ENCODE measurements at regions of chr20 and their contacts with region 1.

Region 1: GRCh38 chr20:3115190-3116107 is 30.9 kb upstream of the AVP start:
- DNase-seq: peak in 6 of 9 donors; percentile 32 to 55 (median 44)
- ATAC-seq: peak; percentile 68
- H3K4me3 ChIP-seq: no peak overlapping the region
- H3K4me3 Mint-ChIP-seq: peak overlapping the region in 2 of 10 donors; percentile 8 to 16
- H3K27ac ChIP-seq: no peak overlapping the region
- H3K27ac Mint-ChIP-seq: peak overlapping the region in 7 of 9 donors; percentile 31 to 97 (median 77)
- H3K4me1 ChIP-seq: peaks cover 0 to 6% of the 10 kb centered on the region in 2 donors
- H3K4me1 Mint-ChIP-seq: peaks cover 11 to 47% (median 28%) of the 10 kb centered on the region in 7 donors
- H3K27me3 ChIP-seq: no peaks in the 10 kb centered on the region
- H3K27me3 Mint-ChIP-seq: no peaks in the 10 kb centered on the region

Region 2: DNA sequence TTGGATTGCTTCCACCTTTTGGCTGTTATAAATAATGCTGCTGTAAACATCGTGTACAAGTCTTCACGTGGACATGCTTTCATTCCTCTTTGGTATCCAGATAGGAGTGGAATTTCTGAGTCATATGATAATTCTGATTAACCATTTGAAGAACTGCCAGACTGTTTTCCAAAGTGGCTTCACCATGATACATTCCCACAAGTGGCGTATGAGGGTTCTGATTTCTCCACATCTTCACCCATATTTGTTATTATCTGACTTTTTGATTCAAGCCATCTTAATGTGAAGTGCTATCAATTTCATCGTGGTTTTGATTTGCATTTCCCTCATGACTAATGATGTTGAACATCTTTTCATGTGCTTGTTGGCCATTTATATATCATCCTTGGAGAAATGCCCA is 641.9 kb before region 1 on chr20:
- CTCF ChIA-PET with region 1: no interaction called
- POLR2A ChIA-PET with region 1: no interaction called
- intact Hi-C with region 1: no loop called
- DNase-seq: no peak
- ATAC-seq: no peak
- H3K4me3 ChIP-seq: no peak overlapping the region
- H3K4me3 Mint-ChIP-seq: no peak overlapping the region
- H3K27ac ChIP-seq: no peak overlapping the region
- H3K27ac Mint-ChIP-seq: peak overlapping the region in 1 of 9 donors; percentile 8
- H3K4me1 ChIP-seq: peaks cover 14 to 16% of the 10 kb centered on the region in 2 donors
- H3K4me1 Mint-ChIP-seq: peaks cover 16 to 32% (median 20%) of the 10 kb centered on the region in 7 donors
- H3K27me3 ChIP-seq: no peaks in the 10 kb centered on the region
- H3K27me3 Mint-ChIP-seq: peaks cover 0 to 2% (median 0%) of the 10 kb centered on the region in 5 donors

Region 3: GRCh38 chr20:3068986-3069900 is 46.2 kb before region 1 on chr20:
- CTCF ChIA-PET with region 1: interaction called, 28 read pairs
- POLR2A ChIA-PET with region 1: interaction called, 5 read pairs
- intact Hi-C with region 1: loop called (anchors 1 to 5 kb)
- DNase-seq: peak in 7 of 9 donors; percentile 52 to 73 (median 62)
- ATAC-seq: peak; percentile 61
- H3K4me3 ChIP-seq: no peak overlapping the region
- H3K4me3 Mint-ChIP-seq: peak overlapping the region in 1 of 10 donors; percentile 25
- H3K27ac ChIP-seq: no peak overlapping the region
- H3K27ac Mint-ChIP-seq: peak overlapping the region in 4 of 9 donors; percentile 32 to 77 (median 52)
- H3K4me1 ChIP-seq: peaks cover 0 to 17% of the 10 kb centered on the region in 2 donors
- H3K4me1 Mint-ChIP-seq: peaks cover 8 to 38% (median 27%) of the 10 kb centered on the region in 7 donors
- H3K27me3 ChIP-seq: no peaks in the 10 kb centered on the region
- H3K27me3 Mint-ChIP-seq: peaks cover 0 to 2% (median 0%) of the 10 kb centered on the region in 5 donors

Region 4: DNA sequence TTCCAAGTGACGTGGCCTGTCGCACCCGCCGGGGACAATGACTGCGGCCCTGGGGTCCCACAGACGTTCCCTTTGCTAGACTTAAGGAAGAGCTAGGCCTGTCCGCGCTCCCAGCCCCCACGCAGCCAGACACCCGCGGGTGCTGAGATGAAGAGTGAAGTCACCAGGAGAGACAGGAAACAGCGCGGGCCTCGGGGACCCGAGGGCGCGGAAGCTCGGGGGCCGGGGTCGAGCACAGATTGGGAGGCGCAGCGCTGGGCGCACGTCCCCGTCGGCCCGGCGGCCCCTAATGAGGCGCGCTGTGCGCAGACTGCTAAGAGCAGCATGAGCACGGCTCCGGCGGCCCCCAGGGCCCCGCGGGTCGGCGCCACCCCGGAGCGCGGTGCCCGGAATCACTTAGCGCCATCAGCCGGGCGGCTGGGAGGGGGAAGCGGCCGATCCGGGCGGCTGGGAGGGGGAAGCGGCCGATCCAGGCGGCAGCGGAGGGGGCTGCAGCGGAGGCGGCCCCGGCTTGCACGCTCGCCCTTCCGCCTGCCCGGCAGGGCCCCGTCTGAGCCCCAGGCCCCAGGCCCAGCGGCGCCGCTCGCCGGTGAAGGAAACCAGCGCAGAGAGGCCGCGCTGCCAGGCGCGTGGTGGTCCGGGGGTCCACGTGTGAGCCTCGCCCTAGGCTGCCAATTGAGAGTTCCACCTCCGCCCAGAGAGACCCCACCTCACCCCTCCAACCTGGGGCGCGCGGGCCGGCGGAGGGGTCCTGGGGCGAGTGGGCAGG is 22.7 kb before region 1 on chr20:
- CTCF ChIA-PET with region 1: interaction called, 36 read pairs
- POLR2A ChIA-PET with region 1: interaction called, 22 read pairs
- intact Hi-C with region 1: loop called in 1 of 2 experiments (anchors 1 kb)
- DNase-seq: peak in 8 of 9 donors; percentile 41 to 75 (median 70)
- ATAC-seq: peak; percentile 27
- H3K4me3 ChIP-seq: peak overlapping the region; percentile 28
- H3K4me3 Mint-ChIP-seq: peak overlapping the region; percentile 78 to 97 (median 93)
- H3K27ac ChIP-seq: peak overlapping the region; percentile 95
- H3K27ac Mint-ChIP-seq: peak overlapping the region; percentile 88 to 100 (median 100)
- H3K4me1 ChIP-seq: peaks cover 0 to 24% of the 10 kb centered on the region in 2 donors
- H3K4me1 Mint-ChIP-seq: peaks cover 17 to 50% (median 31%) of the 10 kb centered on the region in 7 donors
- H3K27me3 ChIP-seq: no peaks in the 10 kb centered on the region
- H3K27me3 Mint-ChIP-seq: peaks cover 0 to 39% (median 0%) of the 10 kb centered on the region in 5 donors

Region 5: DNA sequence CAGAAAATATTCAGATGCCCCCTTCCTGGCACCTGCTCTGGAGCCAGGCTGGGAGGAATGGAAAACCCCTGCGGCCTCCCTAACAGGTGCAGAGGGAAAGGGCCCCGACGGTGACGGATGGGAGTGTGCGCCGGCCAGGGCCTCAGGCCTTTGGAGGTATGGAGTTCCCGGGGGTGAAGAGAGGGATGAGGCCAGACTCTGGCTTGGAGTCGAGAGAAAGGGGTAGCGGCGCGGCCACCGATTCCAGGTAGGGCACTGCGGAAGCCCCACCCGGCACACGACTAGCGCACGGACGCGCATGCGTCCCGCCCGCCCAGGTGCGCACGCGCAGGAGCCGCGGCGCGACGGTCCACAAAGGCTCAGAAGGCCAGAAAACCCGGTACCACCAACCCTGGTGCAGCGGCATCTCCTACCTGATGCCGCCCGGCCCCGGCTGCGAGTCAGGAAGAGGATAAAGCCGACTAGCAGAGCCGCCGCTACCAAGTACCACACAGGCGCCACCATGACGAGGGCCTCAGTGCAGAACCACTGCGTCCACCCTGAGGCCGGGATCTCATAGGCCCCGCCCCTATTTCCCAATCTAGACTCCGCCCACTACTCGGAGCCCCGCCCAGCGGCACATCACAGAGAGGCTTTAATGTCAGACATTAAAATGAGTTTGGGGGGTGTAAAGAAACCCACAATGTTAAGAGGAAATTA is 88.8 kb after region 1 on chr20 and contains the start of gene DDRGK1:
- CTCF ChIA-PET with region 1: interaction called, 6 read pairs
- POLR2A ChIA-PET with region 1: no interaction called
- intact Hi-C with region 1: loop called (anchors 1 kb)
- DNase-seq: peak; percentile 79 to 95 (median 90)
- ATAC-seq: peak; percentile 96
- H3K4me3 ChIP-seq: peak within 1 kb of the TSS; percentile 99
- H3K4me3 Mint-ChIP-seq: peak within 1 kb of the TSS; percentile 91 to 97 (median 95)
- H3K27ac ChIP-seq: peak within 1 kb of the TSS; percentile 91
- H3K27ac Mint-ChIP-seq: peak within 1 kb of the TSS; percentile 91 to 98 (median 96)
- H3K4me1 ChIP-seq: peaks cover 12 to 18% of the 10 kb centered on the region in 2 donors
- H3K4me1 Mint-ChIP-seq: peaks cover 21 to 26% (median 22%) of the 10 kb centered on the region in 7 donors
- H3K27me3 ChIP-seq: no peaks in the 10 kb centered on the region
- H3K27me3 Mint-ChIP-seq: no peaks in the 10 kb centered on the region
- total RNA-seq, gene DDRGK1: 39.4 to 60.3 (median 46.6) TPM

Region 6: DNA sequence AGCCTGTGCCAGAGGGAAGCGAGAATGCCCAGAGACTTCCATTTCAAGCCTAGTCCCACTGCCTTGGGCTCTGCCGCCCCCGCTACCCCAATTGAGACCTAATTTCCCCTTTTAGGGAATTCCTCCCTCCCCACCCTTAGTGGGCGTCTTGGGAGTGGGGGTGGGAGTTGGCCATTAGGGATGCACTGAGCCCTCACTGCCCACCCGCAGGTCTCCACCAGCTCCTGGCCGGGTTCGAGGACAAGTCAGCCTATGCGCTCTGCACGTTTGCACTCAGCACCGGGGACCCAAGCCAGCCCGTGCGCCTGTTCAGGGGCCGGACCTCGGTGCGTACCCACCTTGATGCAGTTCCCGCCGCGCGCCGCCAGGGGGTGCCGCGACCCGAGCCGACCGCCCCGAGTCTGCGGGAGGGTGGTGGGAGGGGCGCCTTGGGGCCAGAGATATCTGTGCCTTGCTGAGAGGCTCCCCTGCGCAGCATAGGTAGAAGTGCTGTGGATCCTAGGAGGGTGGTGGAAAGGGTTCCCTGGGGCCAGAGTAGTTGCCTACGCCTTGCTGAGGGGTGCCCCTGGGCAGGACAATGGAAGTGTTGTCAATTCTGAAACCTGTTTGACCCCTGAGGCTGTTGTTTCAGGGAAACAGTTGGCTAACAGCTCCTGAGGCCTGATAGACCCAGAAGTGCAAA is 103.0 kb after region 1 on chr20:
- CTCF ChIA-PET with region 1: interaction called, 5 read pairs
- POLR2A ChIA-PET with region 1: no interaction called
- intact Hi-C with region 1: loop called in 1 of 2 experiments (anchors 1 kb)
- DNase-seq: peak; percentile 59 to 82 (median 69)
- ATAC-seq: peak; percentile 89
- H3K4me3 ChIP-seq: no peak overlapping the region
- H3K4me3 Mint-ChIP-seq: peak overlapping the region in 1 of 10 donors; percentile 38
- H3K27ac ChIP-seq: no peak overlapping the region
- H3K27ac Mint-ChIP-seq: peak overlapping the region in 1 of 9 donors; percentile 65
- H3K4me1 ChIP-seq: peaks cover 0 to 15% of the 10 kb centered on the region in 2 donors
- H3K4me1 Mint-ChIP-seq: peaks cover 2 to 21% (median 16%) of the 10 kb centered on the region in 7 donors
- H3K27me3 ChIP-seq: no peaks in the 10 kb centered on the region
- H3K27me3 Mint-ChIP-seq: no peaks in the 10 kb centered on the region

Measured in naive thymus-derived CD4-positive, alpha-beta T cell (primary cell).